HepG2 (cell line): ENCODE measurements at regions of chr1 and their contacts with region 1.

Region 1: DNA sequence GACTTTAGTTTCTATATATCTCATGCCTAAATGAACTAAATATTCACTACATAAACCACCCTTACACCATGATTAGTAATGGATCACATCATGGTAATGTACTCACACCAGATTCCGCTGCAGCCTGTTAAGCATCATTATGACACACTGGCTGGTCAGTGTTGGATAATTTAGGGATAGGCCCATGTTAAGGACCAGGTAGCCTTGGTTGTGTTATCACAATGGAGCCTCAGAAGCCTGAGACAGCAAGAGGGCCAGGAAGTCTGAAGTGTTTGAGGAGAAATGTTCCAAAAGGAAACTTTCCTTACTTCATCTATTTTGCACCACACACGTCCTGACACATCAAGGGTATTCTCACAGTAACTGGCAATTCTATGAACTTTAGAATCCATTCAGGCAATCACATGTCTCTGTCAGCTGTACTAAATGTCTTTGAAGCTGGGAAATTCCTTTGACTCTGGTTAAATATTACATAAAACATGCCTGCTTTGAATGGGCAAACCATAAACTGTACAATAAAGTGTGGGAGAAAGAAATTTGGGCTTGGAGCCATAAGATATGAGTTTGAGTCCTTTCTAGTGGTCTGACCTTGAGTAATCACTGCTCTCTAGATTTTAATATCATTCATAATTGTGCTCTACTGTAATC is 105.3 kb upstream of the DPT start:
- DNase-seq: peak; percentile 96
- ATAC-seq: peak; percentile 91
- H3K4me3 ChIP-seq: peak overlapping the region; percentile 22 to 37 (median 29); a peak in 3 of 6 replicates
- H3K27ac ChIP-seq: peak overlapping the region; percentile 97
- H3K4me1 ChIP-seq: peaks cover 70% of the 10 kb centered on the region
- H3K27me3 ChIP-seq: no peaks in the 10 kb centered on the region
- CTCF ChIP-seq: no peak
- EP300 ChIP-seq: peak in 1 of 2 experiments; percentile 95; a peak in 2 of 4 replicates
- POLR2A ChIP-seq: peak; percentile 52 to 57; a peak in 2 of 4 replicates
- RAD21 ChIP-seq: 0 out of 2 replicates have a peak, but pooled peaks have one; percentile 3

Region 2: GRCh38 chr1:168689726-168690602 is 144.4 kb before region 1 on chr1:
- CTCF ChIA-PET with region 1: no interaction called
- POLR2A ChIA-PET with region 1: interaction called, 22 read pairs
- in situ Hi-C with region 1: no loop called
- intact Hi-C with region 1: loop called (anchors 2 kb)
- DNase-seq: peak; percentile 86
- ATAC-seq: peak; percentile 78
- H3K4me3 ChIP-seq: peak overlapping the region in 1 of 3 experiments; percentile 23; a peak in 1 of 6 replicates
- H3K27ac ChIP-seq: peak overlapping the region; percentile 91
- H3K4me1 ChIP-seq: peaks cover 97% of the 10 kb centered on the region
- H3K27me3 ChIP-seq: no peaks in the 10 kb centered on the region
- CTCF ChIP-seq: no peak
- EP300 ChIP-seq: peak in 1 of 2 experiments; percentile 73; a peak in 2 of 4 replicates
- POLR2A ChIP-seq: 0 out of 4 replicates have a peak, but pooled peaks of 1 of the 2 experiments have one; percentile 24
- RAD21 ChIP-seq: no peak

Region 3: DNA sequence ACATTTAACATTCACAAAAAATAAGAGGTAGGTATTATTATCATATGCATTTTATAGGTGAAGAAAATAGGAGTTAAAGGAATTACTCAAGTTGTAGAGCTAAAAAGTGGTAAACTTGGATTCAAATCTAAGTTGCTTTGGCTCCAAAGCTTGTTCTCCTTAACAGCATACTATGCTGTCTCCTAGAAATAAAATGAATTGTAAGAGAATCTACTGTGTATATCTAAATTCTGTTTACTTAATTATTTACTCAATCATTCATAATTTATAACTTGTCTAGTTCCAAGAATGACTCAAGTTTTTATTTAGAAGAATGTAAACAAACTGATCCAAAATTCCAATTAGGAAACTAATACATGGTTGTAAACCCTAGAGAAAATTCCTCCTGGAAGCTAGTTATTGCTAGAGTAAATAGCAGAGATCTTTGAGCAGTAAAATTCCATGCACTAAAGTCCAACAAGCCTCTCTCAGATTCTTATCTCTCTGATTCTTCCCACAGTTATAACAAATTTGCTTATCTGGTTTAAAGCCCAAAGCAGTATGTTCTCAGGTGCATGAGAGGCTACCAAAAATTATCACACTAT is 27.2 kb after region 1 on chr1:
- CTCF ChIA-PET with region 1: no interaction called
- POLR2A ChIA-PET with region 1: no interaction called
- in situ Hi-C with region 1: no loop called
- intact Hi-C with region 1: loop called (anchors 1 kb)
- DNase-seq: peak; percentile 69
- ATAC-seq: peak; percentile 80
- H3K4me3 ChIP-seq: no peak overlapping the region; a peak in 1 of 6 replicates
- H3K27ac ChIP-seq: peak overlapping the region; percentile 53
- H3K4me1 ChIP-seq: peaks cover 45% of the 10 kb centered on the region
- H3K27me3 ChIP-seq: no peaks in the 10 kb centered on the region
- CTCF ChIP-seq: no peak
- EP300 ChIP-seq: peak in 1 of 2 experiments; percentile 89; a peak in 2 of 4 replicates
- POLR2A ChIP-seq: no peak
- RAD21 ChIP-seq: no peak

Region 4: DNA sequence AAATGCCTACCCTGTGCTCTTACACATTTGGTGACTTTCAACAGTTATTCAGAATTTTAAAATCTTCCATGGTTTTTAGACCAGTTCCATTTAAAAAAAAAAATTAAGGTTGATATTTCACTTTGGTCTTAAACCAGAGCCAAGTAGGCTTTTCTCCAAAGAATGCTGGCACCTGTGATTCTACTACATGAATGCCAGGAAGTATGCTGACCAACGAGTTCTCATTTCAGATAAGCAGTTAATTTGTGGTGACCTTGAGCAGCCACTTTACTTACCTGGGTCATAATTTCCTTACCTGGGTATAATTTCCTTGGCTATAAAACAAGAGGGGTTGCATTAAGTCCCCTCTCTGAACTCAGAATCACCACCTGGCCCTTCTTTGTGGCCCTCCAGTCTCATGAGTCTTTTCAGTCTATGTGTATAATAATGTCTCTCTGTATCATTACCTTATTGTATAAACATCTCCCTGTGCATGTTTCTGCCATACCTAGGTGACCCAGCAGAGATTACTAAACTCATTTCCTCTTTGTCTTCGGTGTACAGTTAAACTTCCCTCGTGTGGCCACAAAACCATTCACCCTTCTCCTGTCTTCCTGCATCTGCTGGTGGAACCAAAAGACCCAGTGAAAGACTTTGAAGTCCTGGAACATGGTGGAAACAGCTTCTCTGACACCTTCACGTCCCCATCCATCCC is 33.7 kb after region 1 on chr1:
- CTCF ChIA-PET with region 1: no interaction called
- POLR2A ChIA-PET with region 1: no interaction called
- in situ Hi-C with region 1: no loop called
- intact Hi-C with region 1: loop called (anchors 1 kb)
- DNase-seq: no peak
- ATAC-seq: no peak
- H3K4me3 ChIP-seq: no peak overlapping the region
- H3K27ac ChIP-seq: no peak overlapping the region
- H3K4me1 ChIP-seq: peaks cover 14% of the 10 kb centered on the region
- H3K27me3 ChIP-seq: no peaks in the 10 kb centered on the region; a peak in 1 of 5 replicates
- CTCF ChIP-seq: no peak
- EP300 ChIP-seq: no peak
- POLR2A ChIP-seq: no peak
- RAD21 ChIP-seq: no peak